Aorta (tissue), 5 donors: ENCODE measurements at regions of chr2 and their contacts with region 1.

Region 1: GRCh38 chr2:229800997-229801754 is 86.8 kb upstream of the DNER start:
- DNase-seq: peak; percentile 70 to 78
- ATAC-seq: peak; percentile 68
- H3K4me3 ChIP-seq: no peak overlapping the region
- H3K27ac ChIP-seq: peak overlapping the region in 1 of 2 donors; percentile 43
- H3K4me1 ChIP-seq: peaks cover 2 to 3% of the 10 kb centered on the region in 2 donors
- H3K27me3 ChIP-seq: no peaks in the 10 kb centered on the region

Region 2: DNA sequence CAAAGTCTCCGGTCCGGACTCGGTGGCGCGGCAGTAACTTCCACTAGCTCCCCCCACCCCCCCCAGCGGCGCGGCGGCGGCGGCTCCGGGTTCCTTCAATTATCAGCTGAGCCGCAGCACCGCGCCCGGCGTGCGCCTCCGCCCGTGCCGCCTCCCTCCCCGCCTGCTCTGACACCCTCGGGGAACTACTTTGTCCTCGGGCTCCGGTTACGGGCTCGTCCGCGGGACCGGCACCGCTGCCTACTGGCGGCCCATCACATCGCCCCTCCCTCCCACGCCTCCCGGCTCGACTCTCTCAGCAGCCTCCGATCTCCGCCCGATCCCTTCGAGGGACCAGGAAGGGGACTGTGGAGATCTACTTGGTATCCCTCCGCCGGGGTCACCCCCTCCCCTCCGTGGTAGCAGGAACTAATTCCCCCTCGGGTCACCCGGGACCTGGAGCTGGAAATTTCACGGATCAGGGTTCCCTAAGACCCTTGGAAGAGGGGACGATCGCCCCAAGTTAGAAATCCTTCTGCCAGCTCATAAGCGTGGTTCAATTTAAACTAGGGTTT is 120.8 kb after region 1 on chr2 and contains the start of gene TRIP12:
- intact Hi-C with region 1: loop called (anchors 5 kb)
- DNase-seq: peak; percentile 95 to 96
- ATAC-seq: peak; percentile 95
- H3K4me3 ChIP-seq: peak within 1 kb of the TSS; percentile 62 to 87
- H3K27ac ChIP-seq: peak within 1 kb of the TSS; percentile 92 to 97
- H3K4me1 ChIP-seq: peaks cover 0 to 2% of the 10 kb centered on the region in 2 donors
- H3K27me3 ChIP-seq: no peaks in the 10 kb centered on the region
- total RNA-seq, gene TRIP12: 220 to 232 TPM